AG04449 (cell line): ENCODE measurements at regions of chr17 and their contacts with region 1.

Region 1: GRCh38 chr17:77374170-77374936 is 233.6 kb downstream of the SEC14L1 start:
- DNase-seq: no peak
- H3K4me3 ChIP-seq: peak overlapping the region; percentile 79
- CTCF ChIP-seq: peak; percentile 51

Region 2: GRCh38 chr17:77322514-77323412 is 51.6 kb before region 1 on chr17:
- CTCF ChIA-PET with region 1: no interaction called
- POLR2A ChIA-PET with region 1: interaction called, 13 read pairs
- DNase-seq: peak; percentile 97
- H3K4me3 ChIP-seq: peak overlapping the region; percentile 72
- CTCF ChIP-seq: no peak

Region 3: GRCh38 chr17:77356109-77356689 is 18.2 kb before region 1 on chr17:
- CTCF ChIA-PET with region 1: interaction called, 11 read pairs
- POLR2A ChIA-PET with region 1: interaction called, 7 read pairs
- DNase-seq: no peak
- H3K4me3 ChIP-seq: no peak overlapping the region
- CTCF ChIP-seq: no peak

Region 4: GRCh38 chr17:77388384-77389311 is 14.3 kb after region 1 on chr17:
- CTCF ChIA-PET with region 1: interaction called, 10 read pairs
- POLR2A ChIA-PET with region 1: interaction called, 9 read pairs
- DNase-seq: no peak
- H3K4me3 ChIP-seq: peak overlapping the region; percentile 12; the same call in 1 of the 2 replicates
- CTCF ChIP-seq: no peak

Region 5: DNA sequence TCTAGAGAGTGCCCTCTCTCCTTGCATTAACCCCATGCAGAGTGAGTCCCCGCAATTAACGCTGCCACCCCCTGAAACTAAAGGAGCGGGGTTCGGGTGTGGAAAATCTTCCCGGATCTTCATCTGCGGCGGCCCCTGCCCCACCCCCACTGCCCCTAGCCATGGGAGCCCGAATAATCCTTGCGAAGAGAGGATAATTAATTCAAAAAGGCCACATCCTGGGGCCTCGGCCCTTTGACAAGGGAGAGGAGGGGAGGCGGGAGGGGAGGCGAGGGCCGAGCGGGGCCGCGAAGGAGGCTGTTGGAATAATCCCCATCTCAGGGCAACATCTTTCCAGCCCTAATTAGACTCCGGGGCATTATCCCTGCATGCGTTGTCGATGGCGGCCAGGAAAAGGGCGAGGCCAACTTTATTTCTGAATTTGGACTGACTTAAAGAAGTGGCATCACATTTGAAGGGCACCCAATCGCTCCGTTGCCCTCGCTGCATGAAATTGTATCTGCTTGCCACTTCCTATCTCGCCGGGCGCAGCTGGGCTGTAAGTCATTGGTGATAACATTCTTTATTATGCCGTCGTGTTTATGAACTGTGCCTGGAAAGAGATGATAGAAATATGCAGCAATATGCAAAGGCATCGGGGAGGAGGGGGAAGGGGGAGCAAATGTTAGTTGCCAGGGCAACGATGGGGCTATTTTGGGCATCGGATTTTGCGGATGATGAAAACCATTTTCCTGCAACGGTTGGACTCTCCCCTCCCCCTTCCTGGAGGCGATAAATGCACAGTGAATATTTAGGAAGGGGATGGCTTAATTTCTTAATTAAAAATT is 197.0 kb after region 1 on chr17:
- CTCF ChIA-PET with region 1: no interaction called
- POLR2A ChIA-PET with region 1: no interaction called
- DNase-seq: no peak
- H3K4me3 ChIP-seq: no peak overlapping the region; the same call in 1 of the 2 replicates
- CTCF ChIP-seq: no peak